Mucosa of descending colon (tissue), 3 donors: ENCODE measurements at regions of chr20 and their contacts with region 1.

Region 1: GRCh38 chr20:25178563-25179438 is 16.7 kb upstream of the ENTPD6 start:
- DNase-seq: peak in 1 of 3 donors; percentile 59
- ATAC-seq: peak; percentile 81
- H3K4me3 ChIP-seq: no peak overlapping the region
- H3K4me1 ChIP-seq: no peaks in the 10 kb centered on the region
- CTCF ChIP-seq: peak; percentile 31

Region 2: DNA sequence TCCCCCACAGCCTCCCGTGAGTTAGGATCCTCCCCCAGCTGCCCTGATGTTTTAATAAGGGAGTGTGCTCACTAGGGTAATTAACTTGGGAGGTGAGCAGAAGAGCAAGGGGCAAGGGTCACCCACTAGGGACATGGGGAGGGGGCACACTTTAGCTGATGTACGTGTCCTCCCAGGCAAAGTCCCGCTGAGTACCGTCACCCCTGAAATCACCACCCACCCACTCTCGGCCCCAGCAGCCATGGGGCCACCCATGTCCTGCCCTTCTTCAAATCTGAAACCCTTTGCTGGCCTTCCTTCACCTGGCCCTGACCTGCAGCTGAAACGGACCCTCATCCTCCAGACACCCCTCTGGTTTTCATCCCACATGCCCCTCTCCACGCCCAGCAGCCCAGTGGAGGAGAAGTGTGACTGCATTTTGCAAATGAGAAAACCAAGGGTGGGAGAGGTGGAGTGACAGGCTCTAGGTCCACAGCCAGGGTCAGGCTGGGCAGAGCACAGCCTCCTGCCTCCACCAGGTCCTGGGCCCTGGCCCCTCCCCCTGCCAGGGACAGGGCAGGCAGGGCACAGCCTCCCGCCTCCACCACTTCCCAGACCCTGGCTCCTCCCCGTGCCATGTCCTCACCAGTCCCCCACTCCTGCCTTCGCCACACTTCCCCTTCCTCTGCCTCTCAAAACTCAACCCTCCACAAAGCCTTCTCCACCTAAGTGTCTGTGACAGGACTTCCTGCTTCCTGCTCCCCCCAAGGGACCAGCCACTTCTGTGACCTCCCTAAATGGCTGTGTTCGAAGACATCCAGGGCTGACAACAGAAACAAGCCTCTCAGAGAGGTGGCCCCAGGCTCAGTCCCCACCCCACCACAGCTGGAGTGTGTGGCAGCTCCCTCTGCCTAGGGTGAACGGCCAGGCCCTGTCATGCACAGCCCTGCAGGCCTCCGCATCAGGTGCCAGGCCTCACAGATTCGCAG is 136.0 kb before region 1 on chr20:
- intact Hi-C with region 1: no loop called
- DNase-seq: peak; percentile 24 to 81 (median 53)
- ATAC-seq: peak; percentile 49
- H3K4me3 ChIP-seq: no peak overlapping the region
- H3K4me1 ChIP-seq: peaks cover 38% of the 10 kb centered on the region
- CTCF ChIP-seq: no peak

Region 3: DNA sequence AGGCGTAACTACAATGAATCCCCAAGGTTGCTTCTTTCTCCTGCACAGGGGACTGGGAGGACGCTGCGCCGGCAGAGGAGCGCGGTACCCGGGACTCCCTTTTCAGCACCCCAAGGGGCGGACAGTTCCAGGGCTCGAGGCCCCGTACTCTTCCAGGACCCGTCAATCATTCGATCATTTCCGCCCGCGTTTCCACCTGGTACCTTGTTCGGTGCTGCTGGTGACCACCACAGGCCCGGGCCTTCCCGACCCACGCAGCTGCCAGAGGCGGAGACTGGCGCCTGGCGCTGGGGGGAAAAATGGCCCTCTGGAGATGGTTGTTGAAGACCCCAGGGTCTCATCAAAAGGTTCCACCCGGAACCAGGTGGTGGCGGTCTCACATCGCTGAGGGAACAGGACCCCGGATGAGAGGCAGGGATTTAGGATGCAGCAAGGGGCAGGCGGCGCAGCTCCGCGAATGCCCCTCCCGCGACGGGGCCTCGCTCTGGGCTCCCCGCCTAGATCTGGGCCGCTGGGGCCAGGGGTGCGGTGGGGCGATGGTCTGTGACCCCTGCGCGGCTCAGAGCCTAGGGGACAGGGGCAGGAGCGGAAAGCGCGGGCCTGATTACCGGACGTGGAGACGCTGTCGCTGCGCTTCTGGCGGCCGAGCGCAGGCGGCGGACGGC is 97.6 kb before region 1 on chr20:
- intact Hi-C with region 1: loop called in 1 of 2 experiments (anchors 10 kb)
- DNase-seq: peak in 1 of 3 donors; percentile 56
- ATAC-seq: peak; percentile 17
- H3K4me3 ChIP-seq: no peak overlapping the region
- H3K4me1 ChIP-seq: peaks cover 18% of the 10 kb centered on the region
- CTCF ChIP-seq: no peak

Region 4: GRCh38 chr20:25280051-25280573 is 101.3 kb after region 1 on chr20:
- intact Hi-C with region 1: no loop called
- DNase-seq: peak in 2 of 3 donors; percentile 30 to 33
- ATAC-seq: no peak
- H3K4me3 ChIP-seq: no peak overlapping the region
- H3K4me1 ChIP-seq: no peaks in the 10 kb centered on the region
- CTCF ChIP-seq: no peak

Region 5: GRCh38 chr20:25399037-25399430 is 220.2 kb after region 1 on chr20:
- intact Hi-C with region 1: no loop called
- DNase-seq: peak in 1 of 3 donors; percentile 65
- ATAC-seq: peak; percentile 69
- H3K4me3 ChIP-seq: no peak overlapping the region
- H3K4me1 ChIP-seq: peaks cover 8% of the 10 kb centered on the region
- CTCF ChIP-seq: no peak